Natural killer cell (primary cell): ENCODE measurements at regions of chr1 and their contacts with region 1.

Region 1: GRCh38 chr1:1889847-1890505 is 911 bp downstream of the GNB1 start:
- DNase-seq: peak; percentile 52 to 65
- ATAC-seq: peak; percentile 39 to 53 (median 41)
- H3K4me3 ChIP-seq: peak overlapping the region; percentile 73
- H3K4me3 Mint-ChIP-seq: peak overlapping the region; percentile 84
- H3K27ac ChIP-seq: peak overlapping the region; percentile 93
- H3K27ac Mint-ChIP-seq: peak overlapping the region; percentile 80 to 81
- H3K4me1 ChIP-seq: peaks cover 63% of the 10 kb centered on the region
- H3K4me1 Mint-ChIP-seq: peaks cover 43 to 56% of the 10 kb centered on the region in 2 donors
- H3K27me3 ChIP-seq: no peaks in the 10 kb centered on the region
- H3K27me3 Mint-ChIP-seq: no peaks in the 10 kb centered on the region
- CTCF ChIP-seq: no peak

Region 2: DNA sequence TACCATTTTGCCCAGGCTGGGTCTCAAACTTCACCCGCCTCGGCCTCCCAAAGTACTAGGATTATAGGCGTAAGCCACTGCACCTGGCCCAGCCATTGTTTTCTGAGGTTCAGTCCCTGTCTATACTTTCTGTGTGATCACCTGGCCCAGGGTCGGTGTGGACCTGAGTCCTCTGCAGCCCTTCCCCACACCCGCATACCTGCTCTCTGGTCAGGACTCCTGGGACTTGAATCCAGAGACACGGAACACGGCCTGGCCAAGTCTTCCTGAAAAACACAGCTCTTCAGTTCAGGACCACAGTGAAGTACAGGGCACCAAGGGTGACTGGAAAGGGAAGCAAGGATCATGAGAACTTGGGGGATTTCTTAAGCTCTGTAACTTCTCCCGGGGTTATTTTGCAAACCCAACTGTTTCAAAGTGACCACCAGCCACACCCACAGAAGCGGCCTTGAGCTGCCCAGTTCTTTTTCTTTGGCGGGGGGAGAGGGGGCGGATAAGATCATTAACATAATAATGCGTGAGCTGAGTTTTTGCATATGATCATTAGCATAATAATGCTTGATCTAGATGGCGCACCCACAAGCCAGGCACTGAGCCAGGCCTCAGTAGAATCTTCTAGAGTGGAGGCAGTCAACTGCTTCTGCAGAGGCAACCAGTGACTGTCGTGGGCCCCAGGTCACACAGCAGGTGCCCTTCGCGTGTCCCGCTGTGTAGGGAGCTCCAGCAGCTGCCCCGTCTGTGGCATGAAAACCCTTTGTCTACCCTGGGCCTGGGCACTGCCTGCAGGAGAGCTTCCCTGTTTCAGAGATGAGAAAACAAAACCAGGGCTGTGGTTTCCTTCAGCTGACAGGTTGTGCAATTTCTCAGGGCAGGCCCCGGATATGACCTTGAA is 110.0 kb before region 1 on chr1:
- intact Hi-C with region 1: loop called (anchors 5 kb)
- DNase-seq: peak; percentile 67 to 82
- ATAC-seq: peak; percentile 61 to 79 (median 72)
- H3K4me3 ChIP-seq: peak overlapping the region; percentile 27
- H3K4me3 Mint-ChIP-seq: peak overlapping the region; percentile 87
- H3K27ac ChIP-seq: peak overlapping the region; percentile 99
- H3K27ac Mint-ChIP-seq: peak overlapping the region; percentile 96 to 97
- H3K4me1 ChIP-seq: peaks cover 63% of the 10 kb centered on the region
- H3K4me1 Mint-ChIP-seq: peaks cover 58 to 66% of the 10 kb centered on the region in 2 donors
- H3K27me3 ChIP-seq: no peaks in the 10 kb centered on the region
- H3K27me3 Mint-ChIP-seq: no peaks in the 10 kb centered on the region
- CTCF ChIP-seq: no peak